Heart right ventricle (tissue), 16 donors: ENCODE measurements at regions of chr16 and their contacts with region 1.

Region 1: DNA sequence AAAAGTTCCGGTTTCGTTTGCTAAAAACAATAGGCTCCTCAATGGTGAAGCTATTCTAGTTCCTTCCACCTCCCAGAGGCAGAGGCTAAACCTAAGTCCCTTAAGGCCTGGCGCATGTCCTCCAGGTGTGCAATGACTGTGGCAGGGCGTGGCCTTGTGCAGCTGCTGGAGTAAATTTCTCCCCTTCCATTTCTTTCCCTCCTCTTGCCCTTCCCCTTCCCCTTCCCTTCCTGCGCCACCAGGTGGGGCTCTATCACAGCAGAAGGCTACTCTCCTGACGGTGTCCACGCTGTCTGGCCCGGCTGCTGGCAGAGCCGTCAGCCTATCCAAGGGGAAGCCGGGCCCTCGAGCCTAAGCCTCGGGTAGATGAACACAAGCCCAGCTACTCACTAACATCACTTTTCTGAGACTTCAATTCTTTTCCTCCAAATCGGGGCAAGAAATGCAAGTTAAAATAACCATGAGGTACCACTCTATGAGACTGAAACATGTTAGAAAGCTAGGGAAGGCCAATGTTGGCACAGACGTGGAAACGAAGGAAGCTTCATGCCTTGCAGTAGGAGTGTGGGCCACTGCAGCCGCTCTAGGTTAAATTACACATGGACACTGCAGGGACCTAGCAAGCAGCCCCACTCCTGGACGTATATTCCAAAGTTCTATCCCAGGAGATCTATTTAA is 34.4 kb downstream of the C16orf78 start:
- DNase-seq: peak; percentile 86 to 88
- ATAC-seq: peak; percentile 93 to 99 (median 96)
- H3K4me3 ChIP-seq: no peak overlapping the region
- H3K27ac ChIP-seq: no peak overlapping the region
- H3K4me1 ChIP-seq: peaks cover 0 to 8% (median 0%) of the 10 kb centered on the region in 9 donors
- H3K27me3 ChIP-seq: peaks cover 0 to 8% (median 0%) of the 10 kb centered on the region in 7 donors
- CTCF ChIP-seq: peak; percentile 71 to 95 (median 90)

Region 2: GRCh38 chr16:49586466-49587450 is 178.7 kb after region 1 on chr16:
- intact Hi-C with region 1: loop called in 4 of 10 experiments (anchors 2 to 10 kb)
- DNase-seq: no peak
- ATAC-seq: no peak
- H3K4me3 ChIP-seq: no peak overlapping the region
- H3K27ac ChIP-seq: no peak overlapping the region
- H3K4me1 ChIP-seq: peaks cover 0 to 5% (median 0%) of the 10 kb centered on the region in 9 donors
- H3K27me3 ChIP-seq: no peaks in the 10 kb centered on the region
- CTCF ChIP-seq: no peak

Region 3: DNA sequence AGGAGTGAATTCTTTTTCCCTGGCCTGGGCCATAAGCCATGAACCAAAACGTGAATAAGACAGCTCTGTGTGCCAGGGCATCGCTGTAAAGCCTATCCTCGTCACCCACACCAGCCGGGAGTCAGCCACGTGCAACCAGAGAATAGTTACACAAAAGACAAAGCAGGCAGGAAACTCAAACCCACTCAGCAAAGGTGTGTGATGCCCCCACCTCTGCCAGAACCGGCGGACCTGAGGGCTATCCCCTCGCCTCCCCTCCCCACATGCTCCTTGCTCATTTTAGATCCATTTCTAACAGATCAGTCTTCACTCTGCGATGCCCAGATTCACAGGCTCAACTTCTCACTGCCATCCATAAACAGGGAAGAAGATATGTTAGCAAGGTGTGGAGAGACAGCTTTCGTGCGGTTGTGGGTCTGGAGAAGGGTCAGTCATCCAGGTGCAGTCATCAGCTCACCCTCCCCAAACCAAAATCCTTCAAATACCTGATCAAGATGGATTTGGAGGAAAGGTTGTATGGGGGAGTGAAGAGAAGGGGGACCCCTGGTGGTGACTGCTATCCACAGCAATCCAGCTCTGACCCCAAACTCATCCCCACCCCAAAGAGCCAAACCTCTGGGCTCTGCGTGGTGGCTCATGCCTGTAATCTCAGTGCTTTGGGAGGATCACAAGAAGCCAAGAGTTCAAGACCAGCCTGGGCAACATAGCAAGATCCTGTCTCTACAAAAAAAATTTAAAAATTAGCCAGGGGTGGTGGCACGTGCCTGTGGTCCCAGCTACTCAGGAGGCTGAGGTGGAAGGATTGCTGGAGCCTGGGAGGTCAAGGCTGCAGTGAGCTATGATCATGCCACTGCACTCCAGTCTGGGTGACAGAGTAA is 184.8 kb after region 1 on chr16:
- intact Hi-C with region 1: loop called in 9 of 10 experiments (anchors 1 to 10 kb)
- DNase-seq: peak in 1 of 2 donors; percentile 18
- ATAC-seq: peak in 4 of 8 donors; percentile 54 to 62 (median 60)
- H3K4me3 ChIP-seq: no peak overlapping the region
- H3K27ac ChIP-seq: no peak overlapping the region
- H3K4me1 ChIP-seq: peaks cover 0 to 42% (median 20%) of the 10 kb centered on the region in 9 donors
- H3K27me3 ChIP-seq: peaks cover 0 to 5% (median 0%) of the 10 kb centered on the region in 7 donors
- CTCF ChIP-seq: peak; percentile 53 to 82 (median 79)

Region 4: DNA sequence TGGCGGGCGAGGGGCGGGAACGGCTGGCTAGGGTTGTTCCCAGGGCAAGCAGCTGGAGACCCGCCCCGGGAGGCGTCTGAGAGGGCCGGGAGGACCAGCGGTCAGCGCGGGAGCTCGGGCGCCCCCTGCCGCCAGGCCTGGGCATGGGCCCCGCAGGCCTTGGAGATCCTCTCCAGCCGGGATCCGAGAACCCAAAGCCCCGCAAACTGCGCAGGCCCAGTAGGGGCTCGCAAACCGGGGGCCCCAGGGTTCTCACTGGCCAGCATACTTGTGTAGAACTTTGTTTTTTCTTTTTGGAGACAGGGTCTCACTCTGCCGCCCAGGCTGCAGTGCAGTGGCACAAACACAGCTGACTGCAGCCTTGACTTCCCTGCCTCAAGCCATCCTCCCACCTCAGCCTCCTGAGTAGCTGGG is 468.7 kb after region 1 on chr16:
- intact Hi-C with region 1: loop called in 5 of 10 experiments (anchors 1 to 5 kb)
- DNase-seq: peak; percentile 58 to 84
- ATAC-seq: peak; percentile 87 to 96 (median 94)
- H3K4me3 ChIP-seq: peak overlapping the region; percentile 8 to 59 (median 45)
- H3K27ac ChIP-seq: peak overlapping the region in 1 of 10 donors; percentile 10
- H3K4me1 ChIP-seq: peaks cover 0 to 14% (median 8%) of the 10 kb centered on the region in 9 donors
- H3K27me3 ChIP-seq: peaks cover 0 to 28% (median 16%) of the 10 kb centered on the region in 7 donors
- CTCF ChIP-seq: peak; percentile 88 to 98 (median 96)

Region 5: DNA sequence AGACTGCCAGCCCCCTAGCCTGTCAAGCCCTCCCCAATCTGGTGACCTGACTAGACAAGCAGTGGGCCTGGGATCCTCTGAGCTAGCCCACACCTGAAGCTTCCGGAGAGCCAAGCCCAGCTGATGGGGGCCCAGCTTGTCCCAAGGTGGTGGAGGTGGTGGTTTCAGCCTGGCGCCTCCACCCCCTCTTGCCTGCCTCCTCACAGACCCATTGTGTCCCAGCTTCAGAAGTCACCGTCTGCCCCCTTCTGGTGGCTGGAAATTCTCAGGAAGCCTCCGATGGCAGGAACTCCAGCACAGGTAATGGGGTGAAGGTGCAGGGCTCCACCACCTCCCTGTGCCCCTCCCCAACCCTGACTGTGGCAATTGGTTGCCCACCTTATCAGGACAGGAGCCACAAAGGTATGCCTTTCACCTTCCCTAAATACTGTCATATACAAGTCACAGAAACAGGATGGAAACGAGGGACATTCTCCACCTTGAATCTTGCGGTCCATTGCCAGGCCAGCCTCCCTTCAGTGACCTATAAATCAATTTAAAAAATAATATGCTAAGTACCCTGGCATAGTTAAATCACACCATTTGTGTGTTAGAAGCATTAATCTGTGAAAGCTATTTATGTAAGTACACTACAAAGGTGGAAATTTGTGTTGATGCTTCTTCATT is 513.9 kb after region 1 on chr16:
- intact Hi-C with region 1: loop called (anchors 1 to 5 kb)
- DNase-seq: peak; percentile 43 to 65
- ATAC-seq: peak; percentile 63 to 86 (median 76)
- H3K4me3 ChIP-seq: no peak overlapping the region
- H3K27ac ChIP-seq: no peak overlapping the region
- H3K4me1 ChIP-seq: peaks cover 0 to 4% (median 0%) of the 10 kb centered on the region in 9 donors
- H3K27me3 ChIP-seq: peaks cover 0 to 19% (median 6%) of the 10 kb centered on the region in 7 donors
- CTCF ChIP-seq: peak; percentile 23 to 77 (median 69)